ENCODE measurements at regions of chr18 and their contacts with region 1.

Region 1: GRCh38 chr18:26405190-26405801 is 143.1 kb downstream of the KCTD1 start:
- DNase-seq: no peak

Region 2: DNA sequence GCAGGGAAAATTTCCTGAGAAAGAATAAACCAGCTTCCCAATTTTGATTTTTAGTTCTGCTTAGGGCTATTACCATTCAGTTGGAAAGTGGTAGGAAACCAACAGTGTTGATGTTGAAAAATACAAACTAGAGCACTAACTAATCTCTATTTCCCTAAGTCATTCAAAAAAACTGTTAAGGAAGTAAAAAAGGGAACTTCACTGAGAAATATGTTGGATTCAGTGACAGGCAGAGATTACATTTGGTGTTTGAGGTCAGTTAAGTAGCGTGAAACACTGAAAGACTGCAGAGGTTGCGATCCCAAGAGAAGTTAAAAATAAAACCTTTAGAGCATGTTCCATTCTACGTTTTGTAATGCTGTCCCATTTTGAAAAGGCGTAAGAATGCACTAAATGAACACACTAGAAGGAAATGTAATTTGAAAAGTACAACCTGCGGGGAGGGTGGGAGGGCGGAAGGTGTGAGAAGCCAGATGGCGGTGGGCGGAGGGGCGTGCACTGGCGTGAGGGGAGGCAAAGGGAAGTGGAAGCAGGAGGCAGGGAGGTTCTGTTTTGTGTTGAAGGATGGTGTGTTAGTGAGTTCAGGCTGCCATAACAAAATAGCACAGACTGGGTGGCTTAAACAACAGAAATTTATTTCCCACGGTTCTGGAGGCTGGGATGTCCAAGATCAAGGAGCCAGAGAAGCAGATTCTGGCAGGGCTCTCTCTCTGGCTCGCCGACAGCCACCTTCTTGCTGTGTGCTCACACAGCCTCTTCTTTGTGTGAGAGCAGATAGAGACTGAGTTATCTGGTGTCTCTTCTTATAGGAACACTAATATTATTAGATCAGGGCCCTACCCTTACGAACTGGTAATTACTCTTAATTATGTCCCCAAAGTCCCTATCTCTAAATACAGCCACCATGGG is 237.4 kb after region 1 on chr18:
- intact Hi-C with region 1: loop called in 1 of 2 experiments (anchors 10 kb)
- DNase-seq: no peak